Activated T-helper 2 cell treated with anti-CD3 and anti-CD28 coated beads, Interferon-gamma antibody, Interleukin-2, Interleukin-4, amounts not matched to agents 10 μg/mL and 5 μg/mL and 100 μg/mL, durations not matched to agents 14 hours and 24 hours and 36 hours (primary cell): ENCODE measurements at regions of chr4 and their contacts with region 1.

Region 1: GRCh38 chr4:173334085-173334772 is at the start of gene HMGB2:
- DNase-seq: peak; percentile 100
- H3K4me3 Mint-ChIP-seq: peak within 1 kb of the TSS; percentile 97
- H3K27ac Mint-ChIP-seq: peak within 1 kb of the TSS; percentile 99
- H3K4me1 Mint-ChIP-seq: peaks cover 44% of the 10 kb centered on the region
- H3K27me3 Mint-ChIP-seq: no peaks in the 10 kb centered on the region
- total RNA-seq, gene HMGB2: 380 and 393 TPM in 2 replicates

Region 2: DNA sequence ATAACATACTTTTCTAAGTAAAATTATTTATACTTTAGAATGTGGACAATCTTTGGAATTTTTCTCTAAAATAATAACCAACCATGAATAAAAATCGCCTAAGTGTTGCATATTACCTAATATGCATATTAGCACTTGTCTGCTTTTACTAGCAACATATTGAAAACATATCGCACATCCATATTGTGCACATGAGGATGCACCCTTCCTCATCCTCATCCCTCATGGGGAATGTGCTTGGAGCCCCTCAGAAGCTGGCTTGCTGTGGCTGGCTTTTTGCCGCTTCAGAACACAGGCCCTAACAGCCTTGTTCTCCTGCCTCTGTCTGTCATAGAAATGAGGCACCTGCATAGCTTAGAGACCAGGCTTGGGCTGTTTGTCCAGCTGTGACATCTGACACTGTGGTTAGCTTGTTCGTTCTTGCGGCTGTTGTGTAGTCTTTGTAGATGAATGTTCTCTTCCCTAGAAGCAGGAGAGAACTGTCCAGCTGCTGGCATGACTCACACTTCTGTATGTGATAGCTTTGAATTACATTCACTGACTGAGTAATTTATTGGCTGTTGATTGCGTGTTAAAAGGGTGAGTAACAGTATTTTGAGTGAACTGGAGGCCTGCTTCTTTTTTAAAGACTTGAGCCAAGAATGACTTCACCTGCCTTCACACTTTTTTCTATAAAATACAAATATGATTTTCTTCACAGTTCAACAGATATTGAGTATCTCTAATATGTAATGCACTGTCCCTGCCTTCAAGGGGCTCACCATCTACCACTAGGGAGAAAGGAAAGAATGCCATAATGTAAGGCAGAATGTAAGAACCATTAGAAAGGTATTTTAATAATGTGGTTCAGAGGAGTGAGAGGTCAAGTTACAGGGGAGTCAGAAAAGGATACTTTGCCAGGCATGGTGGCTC is 81.9 kb before region 1 on chr4:
- intact Hi-C with region 1: no loop called
- DNase-seq: no peak
- H3K4me3 Mint-ChIP-seq: no peak overlapping the region
- H3K27ac Mint-ChIP-seq: peak overlapping the region; percentile 11
- H3K4me1 Mint-ChIP-seq: peaks cover 8% of the 10 kb centered on the region
- H3K27me3 Mint-ChIP-seq: no peaks in the 10 kb centered on the region

Region 3: GRCh38 chr4:173288296-173288695 is 45.9 kb before region 1 on chr4:
- intact Hi-C with region 1: loop called (anchors 2 kb)
- DNase-seq: peak; percentile 41
- H3K4me3 Mint-ChIP-seq: peak overlapping the region; percentile 74
- H3K27ac Mint-ChIP-seq: peak overlapping the region; percentile 33
- H3K4me1 Mint-ChIP-seq: peaks cover 21% of the 10 kb centered on the region
- H3K27me3 Mint-ChIP-seq: no peaks in the 10 kb centered on the region

Region 4: GRCh38 chr4:173301518-173302201 is 32.6 kb before region 1 on chr4:
- intact Hi-C with region 1: no loop called
- DNase-seq: no peak
- H3K4me3 Mint-ChIP-seq: no peak overlapping the region
- H3K27ac Mint-ChIP-seq: no peak overlapping the region
- H3K4me1 Mint-ChIP-seq: peaks cover 4% of the 10 kb centered on the region
- H3K27me3 Mint-ChIP-seq: no peaks in the 10 kb centered on the region

Region 5: DNA sequence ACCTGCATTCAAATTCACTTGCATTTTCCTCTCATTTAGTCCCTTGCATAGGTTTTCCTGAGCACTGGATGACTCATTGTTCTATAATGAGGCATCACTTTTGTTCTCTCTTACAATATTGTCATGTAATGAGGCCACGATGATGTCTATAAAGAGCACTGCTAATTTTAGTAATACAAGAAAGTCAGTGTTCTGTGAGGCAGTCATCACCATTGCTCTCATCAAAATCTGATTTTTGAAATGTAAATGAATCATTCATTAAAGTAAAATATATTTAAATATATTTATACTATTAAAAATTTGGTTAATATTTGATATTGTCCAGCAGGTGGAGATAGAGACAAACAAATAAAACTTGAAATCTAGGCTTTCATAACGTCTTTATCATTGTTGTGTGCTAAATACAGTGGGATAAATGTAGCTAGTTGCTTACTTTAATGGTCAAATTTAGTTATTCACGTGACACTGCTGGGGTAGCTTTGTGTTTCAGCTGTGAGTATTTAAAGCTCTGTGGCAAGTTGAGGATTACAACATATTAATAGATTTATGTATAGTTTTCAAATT is 15.5 kb before region 1 on chr4:
- intact Hi-C with region 1: loop called (anchors 2 kb)
- DNase-seq: no peak
- H3K4me3 Mint-ChIP-seq: no peak overlapping the region
- H3K27ac Mint-ChIP-seq: no peak overlapping the region
- H3K4me1 Mint-ChIP-seq: peaks cover 6% of the 10 kb centered on the region
- H3K27me3 Mint-ChIP-seq: no peaks in the 10 kb centered on the region

Region 6: DNA sequence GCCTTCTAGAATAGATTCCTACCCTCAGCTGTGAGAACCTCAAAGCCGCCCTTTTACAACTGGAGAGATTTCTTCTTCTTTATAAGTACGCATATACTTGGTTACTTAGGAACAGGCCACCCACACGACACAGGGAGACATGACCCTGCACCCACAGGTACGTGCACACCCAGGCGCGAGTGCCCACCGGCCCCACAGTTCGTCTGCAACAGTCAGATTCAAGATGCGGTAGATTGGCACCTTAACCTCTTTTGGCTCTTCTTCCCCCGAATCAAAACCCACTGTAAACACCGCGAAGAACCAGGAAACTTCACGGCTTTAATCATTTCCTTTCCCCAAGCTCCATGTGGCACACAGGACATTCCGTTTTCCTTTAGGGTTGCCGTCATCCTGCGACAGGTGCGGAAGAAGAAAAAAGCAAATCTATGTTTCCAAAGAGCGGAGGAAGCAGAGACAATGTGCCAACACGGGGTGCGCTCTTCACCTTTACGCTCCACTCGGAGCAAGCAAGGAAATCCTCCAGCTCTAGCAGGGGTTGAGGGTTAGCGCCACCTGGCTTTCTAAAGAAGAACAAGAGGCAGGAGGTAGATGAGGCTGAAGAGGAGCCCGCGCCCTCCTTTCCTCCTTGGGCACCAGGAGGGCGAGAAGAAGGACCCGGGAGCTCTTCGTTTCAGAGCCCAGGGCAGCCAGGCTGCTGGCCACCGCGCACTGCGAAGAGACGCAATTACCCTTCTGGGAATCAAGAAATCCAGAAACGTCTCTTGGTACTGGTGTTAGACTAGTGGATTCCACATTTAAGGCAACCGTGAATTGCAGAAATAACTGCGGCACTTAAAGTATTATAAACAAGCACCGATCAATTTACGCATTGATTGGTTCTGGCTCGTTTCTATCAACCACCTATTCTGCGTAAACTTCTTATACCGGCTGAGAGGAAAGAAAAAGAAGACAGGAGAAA is 160.1 kb after region 1 on chr4:
- intact Hi-C with region 1: loop called (anchors 5 kb)
- DNase-seq: peak; percentile 53
- H3K4me3 Mint-ChIP-seq: peak overlapping the region; percentile 81
- H3K27ac Mint-ChIP-seq: no peak overlapping the region
- H3K4me1 Mint-ChIP-seq: peaks cover 18% of the 10 kb centered on the region
- H3K27me3 Mint-ChIP-seq: peaks cover 29% of the 10 kb centered on the region

Region 7: GRCh38 chr4:174282836-174283506 is 948.7 kb after region 1 on chr4:
- intact Hi-C with region 1: loop called (anchors 10 kb)
- DNase-seq: peak; percentile 79
- H3K4me3 Mint-ChIP-seq: peak overlapping the region; percentile 98
- H3K27ac Mint-ChIP-seq: peak overlapping the region; percentile 99
- H3K4me1 Mint-ChIP-seq: peaks cover 52% of the 10 kb centered on the region
- H3K27me3 Mint-ChIP-seq: no peaks in the 10 kb centered on the region